H1 (cell line): ENCODE measurements at regions of chr18 and their contacts with region 1.

Region 1: DNA sequence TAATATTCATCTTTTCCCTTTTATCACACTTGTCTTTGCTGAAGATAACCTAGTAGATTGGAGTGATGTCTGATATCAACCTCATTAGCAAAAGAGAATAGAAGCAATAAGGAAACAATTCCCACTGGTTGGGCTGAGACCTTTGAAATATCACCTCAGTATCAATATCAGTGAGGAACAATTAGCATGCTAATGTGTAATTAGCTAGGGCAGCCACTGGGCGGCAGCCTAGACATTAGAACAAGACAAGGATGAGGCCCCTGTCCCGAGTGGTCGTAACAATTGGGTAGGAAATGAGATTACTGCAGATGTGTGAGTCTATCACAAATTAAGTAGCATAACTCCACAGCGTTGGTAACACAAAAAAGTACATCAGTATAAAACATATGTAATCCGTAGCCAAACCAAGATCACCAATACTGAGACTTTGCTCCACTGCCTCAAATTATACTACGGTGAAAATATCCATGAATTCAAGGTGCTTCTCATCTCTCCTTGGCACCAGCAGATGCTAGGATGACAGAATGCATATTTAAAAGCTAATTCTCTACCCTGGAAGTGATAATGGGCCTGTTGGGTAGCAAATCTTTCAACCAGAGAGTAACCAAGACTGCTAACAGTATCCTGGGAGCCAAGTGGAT is 99.1 kb downstream of the ALPK2 start:
- DNase-seq: peak; percentile 25 to 78
- H3K4me3 ChIP-seq: no peak overlapping the region
- H3K27ac ChIP-seq: no peak overlapping the region
- H3K4me1 ChIP-seq: no peaks in the 10 kb centered on the region
- H3K27me3 ChIP-seq: no peaks in the 10 kb centered on the region
- CTCF ChIP-seq: peak; percentile 51 to 94 (median 87)
- EP300 ChIP-seq: no peak
- POLR2A ChIP-seq: no peak
- RAD21 ChIP-seq: peak; percentile 98 to 99

Region 2: GRCh38 chr18:58223717-58224424 is 306.0 kb before region 1 on chr18:
- CTCF ChIA-PET with region 1: no interaction called
- POLR2A ChIA-PET with region 1: no interaction called
- DNase-seq: peak in 1 of 2 experiments; percentile 40
- H3K4me3 ChIP-seq: no peak overlapping the region
- H3K27ac ChIP-seq: no peak overlapping the region
- H3K4me1 ChIP-seq: peaks cover 14 to 42% (median 33%) of the 10 kb centered on the region in 4 experiments
- H3K27me3 ChIP-seq: no peaks in the 10 kb centered on the region
- CTCF ChIP-seq: no peak
- EP300 ChIP-seq: no peak
- POLR2A ChIP-seq: no peak
- RAD21 ChIP-seq: no peak

Region 3: GRCh38 chr18:58344861-58345463 is 184.9 kb before region 1 on chr18:
- CTCF ChIA-PET with region 1: no interaction called
- POLR2A ChIA-PET with region 1: no interaction called
- DNase-seq: peak in 1 of 2 experiments; percentile 36
- H3K4me3 ChIP-seq: peak overlapping the region in 1 of 4 experiments; percentile 7; a peak in 2 of 8 replicates
- H3K27ac ChIP-seq: peak overlapping the region; percentile 42; the same call in 1 of the 2 replicates
- H3K4me1 ChIP-seq: peaks cover 15 to 44% (median 35%) of the 10 kb centered on the region in 4 experiments
- H3K27me3 ChIP-seq: no peaks in the 10 kb centered on the region
- CTCF ChIP-seq: no peak
- EP300 ChIP-seq: no peak
- POLR2A ChIP-seq: no peak
- RAD21 ChIP-seq: no peak

Region 4: DNA sequence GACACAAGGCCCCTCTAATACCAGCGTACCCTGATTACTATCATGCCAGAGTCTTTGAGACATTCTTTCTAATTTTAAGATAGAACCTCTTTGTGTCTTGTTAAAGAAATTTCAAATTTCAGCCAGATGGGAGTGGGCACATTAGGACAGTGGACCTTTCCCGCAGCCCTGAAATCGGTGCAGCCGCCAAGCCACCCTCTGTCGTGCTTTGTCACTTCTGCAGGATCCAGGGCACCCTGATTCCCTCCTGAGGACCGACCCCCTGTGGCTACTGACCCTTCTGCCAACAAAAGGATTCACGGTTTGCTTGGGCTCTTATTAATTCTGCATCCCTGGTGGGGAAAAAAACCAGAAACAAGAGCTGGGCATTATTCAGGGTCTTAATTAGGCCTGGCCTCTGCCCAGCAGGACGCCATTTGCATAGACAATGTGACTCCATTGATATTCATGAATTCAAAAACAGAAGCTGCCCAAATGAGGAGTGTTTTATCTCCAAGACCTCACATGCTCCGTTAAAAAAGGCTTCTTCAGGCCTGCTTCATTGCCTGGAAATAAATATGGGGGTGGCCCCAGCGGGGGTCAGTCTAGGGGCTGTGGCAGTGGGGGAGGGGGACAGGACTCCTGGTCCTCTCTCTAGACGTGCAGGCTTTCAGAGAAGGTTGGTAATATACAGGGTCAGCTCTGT is 17.8 kb before region 1 on chr18:
- CTCF ChIA-PET with region 1: interaction called, 15 read pairs
- POLR2A ChIA-PET with region 1: interaction called, 6 read pairs
- DNase-seq: peak; percentile 75
- H3K4me3 ChIP-seq: peak overlapping the region; percentile 11 to 48 (median 32); a peak in 5 of 8 replicates
- H3K27ac ChIP-seq: peak overlapping the region; percentile 78
- H3K4me1 ChIP-seq: peaks cover 11 to 19% (median 16%) of the 10 kb centered on the region in 4 experiments
- H3K27me3 ChIP-seq: no peaks in the 10 kb centered on the region
- CTCF ChIP-seq: no peak
- EP300 ChIP-seq: peak in 1 of 2 experiments; percentile 62; a peak in 1 of 3 replicates
- POLR2A ChIP-seq: no peak
- RAD21 ChIP-seq: no peak

Region 5: GRCh38 chr18:58578835-58579560 is 49.2 kb after region 1 on chr18:
- CTCF ChIA-PET with region 1: no interaction called
- POLR2A ChIA-PET with region 1: no interaction called
- DNase-seq: no peak
- H3K4me3 ChIP-seq: no peak overlapping the region
- H3K27ac ChIP-seq: no peak overlapping the region
- H3K4me1 ChIP-seq: peaks cover 0 to 18% (median 12%) of the 10 kb centered on the region in 4 experiments; a peak in 4 of 7 replicates
- H3K27me3 ChIP-seq: no peaks in the 10 kb centered on the region
- CTCF ChIP-seq: no peak
- EP300 ChIP-seq: no peak
- POLR2A ChIP-seq: no peak
- RAD21 ChIP-seq: no peak

Region 6: GRCh38 chr18:58671111-58671631 is 141.3 kb after region 1 on chr18 and contains the start of gene MALT1:
- CTCF ChIA-PET with region 1: interaction called, 11 read pairs
- POLR2A ChIA-PET with region 1: interaction called, 3 read pairs
- DNase-seq: peak; percentile 62 to 98
- H3K4me3 ChIP-seq: peak within 1 kb of the TSS; percentile 68 to 88 (median 75)
- H3K27ac ChIP-seq: peak within 1 kb of the TSS; percentile 47; the same call in 1 of the 2 replicates
- H3K4me1 ChIP-seq: peaks cover 0 to 5% (median 2%) of the 10 kb centered on the region in 4 experiments; a peak in 5 of 7 replicates
- H3K27me3 ChIP-seq: no peaks in the 10 kb centered on the region
- CTCF ChIP-seq: no peak
- EP300 ChIP-seq: no peak
- POLR2A ChIP-seq: peak; percentile 70 to 78
- RAD21 ChIP-seq: 0 out of 4 replicates have a peak, but pooled peaks of 1 of the 2 experiments have one; percentile 9
- total RNA-seq, gene MALT1: 25.9 and 26.1 TPM in 2 replicates

Region 7: DNA sequence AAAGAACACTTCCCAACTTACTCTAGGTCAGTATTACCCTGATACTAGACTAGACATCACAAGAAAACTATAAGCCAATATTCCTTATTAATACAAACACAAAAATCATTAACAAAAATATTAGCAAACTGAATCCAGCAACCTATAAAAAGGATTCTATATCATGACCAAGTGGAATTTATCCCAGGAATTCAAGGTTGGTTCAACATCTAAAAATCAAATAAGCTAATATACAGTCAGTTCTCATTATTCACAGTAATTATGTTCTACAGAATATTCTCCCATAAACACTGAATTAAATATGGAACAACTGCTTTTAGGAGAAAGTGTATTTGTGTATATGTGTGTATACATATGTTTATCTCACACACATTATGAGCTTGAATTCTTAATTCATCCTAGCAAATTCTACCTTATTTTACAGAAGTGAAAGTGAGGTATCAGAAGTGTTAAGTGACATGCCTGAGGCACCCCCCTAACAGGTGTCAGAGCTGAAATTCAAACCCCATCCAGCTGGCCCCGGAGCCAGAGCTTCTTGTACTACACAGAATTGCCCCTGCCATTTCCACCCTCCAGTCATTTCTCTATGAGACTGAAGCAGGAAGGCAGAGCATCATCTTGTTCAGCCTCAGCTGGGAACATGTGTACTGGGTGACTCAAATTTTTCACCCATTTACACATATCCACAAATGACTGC is 219.2 kb after region 1 on chr18:
- CTCF ChIA-PET with region 1: interaction called, 26 read pairs
- POLR2A ChIA-PET with region 1: no interaction called
- DNase-seq: no peak
- H3K4me3 ChIP-seq: no peak overlapping the region
- H3K27ac ChIP-seq: no peak overlapping the region
- H3K4me1 ChIP-seq: no peaks in the 10 kb centered on the region
- H3K27me3 ChIP-seq: no peaks in the 10 kb centered on the region
- CTCF ChIP-seq: no peak
- EP300 ChIP-seq: no peak
- POLR2A ChIP-seq: no peak
- RAD21 ChIP-seq: no peak

Region 8: DNA sequence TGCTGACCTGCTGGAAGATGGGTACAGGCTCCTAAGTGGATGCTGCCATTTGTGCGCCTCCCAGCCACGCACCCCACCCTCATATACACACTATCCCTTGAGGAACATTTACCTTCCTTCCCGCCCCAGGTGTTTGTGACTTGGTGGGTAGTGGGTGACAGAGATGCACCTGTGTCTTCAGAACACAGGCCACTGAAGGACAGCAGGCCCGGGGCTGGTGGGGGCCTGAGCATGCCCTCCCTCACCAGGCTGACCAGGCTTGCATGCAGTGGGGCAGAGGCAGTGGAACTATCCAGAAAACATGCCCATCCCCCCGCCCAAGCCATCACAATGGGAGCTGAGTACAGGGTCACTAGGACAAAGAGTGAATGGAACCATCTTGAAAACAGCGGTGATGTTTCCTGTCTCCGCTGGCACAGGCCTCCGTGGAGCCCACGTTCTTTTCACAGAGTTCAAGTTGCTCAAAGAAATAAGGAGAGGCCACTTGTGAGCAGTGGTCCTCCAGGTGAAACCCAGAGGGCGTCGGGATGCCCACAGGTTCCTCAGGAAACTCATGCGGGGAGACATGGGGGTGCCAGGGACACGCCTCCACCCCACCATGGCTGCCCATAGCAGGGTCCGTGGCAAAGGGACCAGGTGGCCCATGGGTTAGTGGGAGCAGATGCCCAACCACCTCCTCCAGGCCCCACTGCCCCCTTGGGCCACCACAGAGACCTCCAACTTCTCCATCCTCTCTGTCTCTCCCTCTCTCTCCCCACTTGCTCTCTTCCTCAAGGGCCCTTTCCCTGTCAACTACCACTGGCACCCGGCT is 232.3 kb after region 1 on chr18:
- CTCF ChIA-PET with region 1: interaction called, 493 read pairs
- POLR2A ChIA-PET with region 1: interaction called, 3 read pairs
- DNase-seq: peak in 1 of 2 experiments; percentile 46
- H3K4me3 ChIP-seq: no peak overlapping the region
- H3K27ac ChIP-seq: no peak overlapping the region
- H3K4me1 ChIP-seq: peaks cover 0 to 7% (median 0%) of the 10 kb centered on the region in 4 experiments; a peak in 3 of 7 replicates
- H3K27me3 ChIP-seq: no peaks in the 10 kb centered on the region
- CTCF ChIP-seq: no peak
- EP300 ChIP-seq: no peak
- POLR2A ChIP-seq: no peak
- RAD21 ChIP-seq: no peak